ENCODE measurements at regions of chr14 and their contacts with region 1.

Region 1: GRCh38 chr14:69107407-69108003 is 45.4 kb downstream of the DCAF5 start:
- DNase-seq: no peak
- H3K4me3 ChIP-seq: no peak overlapping the region
- H3K27ac ChIP-seq: peak overlapping the region in 3 of 4 donors; percentile 27 to 62 (median 48)
- H3K4me1 ChIP-seq: no peaks in the 10 kb centered on the region
- H3K27me3 ChIP-seq: no peaks in the 10 kb centered on the region
- CTCF ChIP-seq: peak; percentile 58 to 82 (median 79)
- EP300 ChIP-seq: no peak
- POLR2A ChIP-seq: no peak

Region 2: GRCh38 chr14:68862954-68863594 is 244.4 kb before region 1 on chr14:
- intact Hi-C with region 1: loop called (anchors 1 kb)
- DNase-seq: peak; percentile 88
- H3K4me3 ChIP-seq: no peak overlapping the region
- H3K27ac ChIP-seq: peak overlapping the region in 1 of 4 donors; percentile 37
- H3K4me1 ChIP-seq: no peaks in the 10 kb centered on the region
- H3K27me3 ChIP-seq: no peaks in the 10 kb centered on the region
- CTCF ChIP-seq: peak; percentile 54 to 74 (median 70)
- EP300 ChIP-seq: no peak
- POLR2A ChIP-seq: no peak

Region 3: DNA sequence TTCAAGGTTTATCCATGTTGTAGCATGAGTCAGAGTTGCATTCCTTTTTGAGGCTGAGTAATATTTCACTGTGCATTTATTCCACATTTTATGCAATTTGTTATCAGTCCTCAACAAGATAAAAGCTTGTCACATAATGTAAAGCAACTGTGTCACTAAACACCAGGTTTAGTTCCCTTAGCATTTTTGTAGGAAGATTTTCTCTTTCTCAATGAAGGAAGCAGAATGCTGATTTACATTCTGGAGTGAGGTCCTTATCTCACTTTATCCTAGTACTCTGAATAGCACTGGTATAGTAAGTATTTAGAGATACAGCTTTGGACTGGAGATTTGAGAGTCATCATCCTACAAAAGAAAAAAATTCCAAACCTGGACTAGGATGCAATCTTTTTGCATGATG is 74.0 kb after region 1 on chr14:
- intact Hi-C with region 1: no loop called
- DNase-seq: no peak
- H3K4me3 ChIP-seq: no peak overlapping the region
- H3K27ac ChIP-seq: no peak overlapping the region
- H3K4me1 ChIP-seq: no peaks in the 10 kb centered on the region
- H3K27me3 ChIP-seq: no peaks in the 10 kb centered on the region
- CTCF ChIP-seq: no peak
- EP300 ChIP-seq: no peak
- POLR2A ChIP-seq: no peak